ENCODE measurements at regions of chr12 and their contacts with region 1.

Region 1: DNA sequence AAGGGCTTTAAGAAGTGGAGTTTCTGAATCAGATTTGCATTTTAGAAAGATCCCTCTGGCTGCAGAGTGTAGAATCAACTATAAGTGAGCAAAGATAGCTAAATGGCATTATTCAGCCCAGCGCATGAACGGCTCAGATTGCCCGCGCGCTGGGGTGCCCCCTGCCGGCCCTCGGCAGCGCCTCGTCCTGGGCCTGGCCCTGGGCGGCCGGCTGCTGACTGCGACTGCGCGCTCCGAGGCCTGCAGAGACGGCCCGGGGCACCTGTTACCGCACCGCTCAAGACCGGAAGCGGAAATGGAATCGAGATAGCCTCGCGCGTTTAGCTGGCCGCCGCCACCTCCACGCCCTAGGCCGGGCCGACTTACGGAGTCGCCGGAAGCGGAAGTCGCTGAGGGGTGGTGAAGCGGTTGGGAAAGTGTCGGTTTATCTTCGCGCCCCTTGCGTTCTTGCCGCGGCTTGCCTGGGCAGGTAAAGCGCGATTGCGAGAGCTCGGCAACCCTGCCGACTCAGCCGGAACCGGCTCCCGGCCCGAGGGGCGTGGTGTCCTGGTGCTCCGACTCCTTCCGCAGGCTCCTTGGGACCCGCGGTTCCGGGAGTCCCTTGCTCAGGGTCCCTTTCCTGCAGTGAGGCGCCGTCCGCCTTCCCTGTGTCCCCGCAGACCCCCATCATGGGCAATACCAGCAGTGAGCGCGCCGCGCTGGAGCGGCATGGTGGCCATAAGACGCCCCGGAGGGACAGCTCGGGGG is at the start of gene PRKAB1:
- DNase-seq: peak; percentile 95
- H3K27ac ChIP-seq: peak within 1 kb of the TSS; percentile 97
- CTCF ChIP-seq: peak; percentile 98

Region 2: GRCh38 chr12:119682639-119683252 is 15.0 kb after region 1 on chr12:
- CTCF ChIA-PET with region 1: no interaction called
- POLR2A ChIA-PET with region 1: no interaction called
- DNase-seq: no peak
- H3K27ac ChIP-seq: no peak overlapping the region
- CTCF ChIP-seq: no peak

Region 3: GRCh38 chr12:119808441-119808840 is 140.7 kb after region 1 on chr12:
- CTCF ChIA-PET with region 1: interaction called, 10 read pairs
- POLR2A ChIA-PET with region 1: no interaction called
- DNase-seq: peak; percentile 46
- H3K27ac ChIP-seq: no peak overlapping the region
- CTCF ChIP-seq: no peak

Measured in RWPE1 (cell line).